Activated T-helper 1 cell treated with anti-CD3 and anti-CD28 coated beads, Interleukin-12 subunit alpha, Interleukin-12 subunit beta, Interleukin-2, Interleukin-4 antibody, amounts not matched to agents 30 ng/mL and 10 ng/mL and 1 ng/mL, durations not matched to agents 14 hours and 24 hours and 36 hours (primary cell): ENCODE measurements at regions of chr9 and their contacts with region 1.

Region 1: GRCh38 chr9:100352727-100353505 is at the start of gene TEX10:
- DNase-seq: peak; percentile 85
- H3K4me3 Mint-ChIP-seq: peak within 1 kb of the TSS; percentile 91
- H3K27ac Mint-ChIP-seq: peak within 1 kb of the TSS; percentile 75
- H3K4me1 Mint-ChIP-seq: peaks cover 50% of the 10 kb centered on the region
- H3K27me3 Mint-ChIP-seq: no peaks in the 10 kb centered on the region
- total RNA-seq, gene TEX10: 30.4 and 30.9 TPM in 2 replicates

Region 2: DNA sequence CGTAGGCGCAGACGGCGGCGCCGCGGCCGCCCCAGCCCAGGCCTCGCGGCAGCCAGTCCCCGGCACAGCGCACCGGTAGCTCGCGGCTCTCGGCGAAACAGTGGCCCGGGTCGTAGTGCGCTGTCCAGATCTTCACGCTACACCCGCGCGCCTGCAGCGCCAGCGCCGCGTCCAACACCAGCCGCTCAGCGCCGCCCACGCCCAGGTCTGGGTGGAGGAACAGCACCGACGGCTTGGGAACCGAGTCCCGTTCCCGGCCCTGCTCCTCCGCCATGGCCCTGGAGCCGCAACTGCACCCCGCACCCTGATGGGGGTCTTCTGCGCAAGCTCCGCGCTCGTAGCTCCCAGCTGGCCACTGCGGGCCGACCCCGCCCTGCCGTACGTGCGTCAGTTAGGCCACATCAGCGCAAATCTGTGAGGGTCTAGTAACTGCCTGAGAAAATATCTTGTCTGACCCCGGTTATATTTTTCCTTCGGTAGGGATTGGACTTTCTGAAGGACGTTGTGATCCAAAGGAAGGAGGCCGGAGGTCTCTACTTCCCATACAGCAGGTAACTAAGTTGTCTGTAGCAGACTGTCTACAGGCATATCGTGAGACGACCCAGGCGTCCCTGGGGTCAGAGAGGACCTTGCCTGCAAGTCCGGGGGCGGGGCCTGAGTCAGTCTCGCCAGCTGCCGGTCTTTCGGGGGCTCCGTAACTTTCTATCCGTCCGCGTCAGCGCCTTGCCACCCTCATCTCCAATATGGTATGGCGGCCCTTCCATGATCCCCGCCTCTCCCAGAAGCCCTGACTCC is 1131.1 kb before region 1 on chr9 and contains the starts of genes ALG2 and SEC61B:
- intact Hi-C with region 1: loop called (anchors 5 kb)
- DNase-seq: peak; percentile 89
- H3K4me3 Mint-ChIP-seq: peak within 1 kb of the TSS; percentile 99
- H3K27ac Mint-ChIP-seq: peak within 1 kb of the TSS; percentile 98
- H3K4me1 Mint-ChIP-seq: peaks cover 67% of the 10 kb centered on the region
- H3K27me3 Mint-ChIP-seq: no peaks in the 10 kb centered on the region
- total RNA-seq, gene ALG2: 37.6 and 39.7 TPM in 2 replicates
- total RNA-seq, gene SEC61B: 180 and 184 TPM in 2 replicates

Region 3: GRCh38 chr9:100028201-100028784 is 324.6 kb before region 1 on chr9:
- intact Hi-C with region 1: no loop called
- DNase-seq: peak; percentile 43
- H3K4me3 Mint-ChIP-seq: no peak overlapping the region
- H3K27ac Mint-ChIP-seq: no peak overlapping the region
- H3K4me1 Mint-ChIP-seq: peaks cover 14% of the 10 kb centered on the region
- H3K27me3 Mint-ChIP-seq: no peaks in the 10 kb centered on the region

Region 4: DNA sequence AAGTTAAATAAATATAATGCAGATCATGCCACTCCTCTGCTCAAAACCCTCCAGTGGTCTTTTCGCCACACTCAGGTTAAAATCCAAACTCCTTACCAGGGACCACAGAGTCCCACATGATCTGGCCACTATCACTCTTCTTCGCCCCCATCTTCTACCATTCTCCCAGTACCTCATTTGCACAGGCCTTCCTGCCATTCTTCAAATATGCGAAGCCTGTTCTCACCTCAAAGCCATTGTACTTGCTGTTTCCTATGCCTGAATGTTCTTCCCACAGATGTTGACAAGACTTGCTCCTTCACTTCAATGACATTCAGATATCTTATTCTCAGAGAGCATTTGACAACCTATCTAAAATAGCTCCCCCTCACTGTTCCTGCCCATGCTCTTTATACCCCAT is 11.0 kb before region 1 on chr9:
- intact Hi-C with region 1: loop called (anchors 1 kb)
- DNase-seq: no peak
- H3K4me3 Mint-ChIP-seq: no peak overlapping the region
- H3K27ac Mint-ChIP-seq: no peak overlapping the region
- H3K4me1 Mint-ChIP-seq: peaks cover 19% of the 10 kb centered on the region
- H3K27me3 Mint-ChIP-seq: no peaks in the 10 kb centered on the region

Region 5: GRCh38 chr9:100411472-100412283 is 58.8 kb after region 1 on chr9:
- intact Hi-C with region 1: loop called (anchors 1 kb)
- DNase-seq: peak; percentile 81
- H3K4me3 Mint-ChIP-seq: peak overlapping the region; percentile 83
- H3K27ac Mint-ChIP-seq: peak overlapping the region; percentile 65
- H3K4me1 Mint-ChIP-seq: peaks cover 13% of the 10 kb centered on the region
- H3K27me3 Mint-ChIP-seq: peaks cover 11% of the 10 kb centered on the region

Region 6: GRCh38 chr9:100426530-100427428 is 73.9 kb after region 1 on chr9 and contains the start of gene MSANTD3:
- intact Hi-C with region 1: loop called (anchors 1 kb)
- DNase-seq: peak; percentile 28
- H3K4me3 Mint-ChIP-seq: peak within 1 kb of the TSS; percentile 87
- H3K27ac Mint-ChIP-seq: peak within 1 kb of the TSS; percentile 91
- H3K4me1 Mint-ChIP-seq: peaks cover 21% of the 10 kb centered on the region
- H3K27me3 Mint-ChIP-seq: peaks cover 10% of the 10 kb centered on the region
- total RNA-seq, gene MSANTD3: 11.1 and 11.3 TPM in 2 replicates

Region 7: DNA sequence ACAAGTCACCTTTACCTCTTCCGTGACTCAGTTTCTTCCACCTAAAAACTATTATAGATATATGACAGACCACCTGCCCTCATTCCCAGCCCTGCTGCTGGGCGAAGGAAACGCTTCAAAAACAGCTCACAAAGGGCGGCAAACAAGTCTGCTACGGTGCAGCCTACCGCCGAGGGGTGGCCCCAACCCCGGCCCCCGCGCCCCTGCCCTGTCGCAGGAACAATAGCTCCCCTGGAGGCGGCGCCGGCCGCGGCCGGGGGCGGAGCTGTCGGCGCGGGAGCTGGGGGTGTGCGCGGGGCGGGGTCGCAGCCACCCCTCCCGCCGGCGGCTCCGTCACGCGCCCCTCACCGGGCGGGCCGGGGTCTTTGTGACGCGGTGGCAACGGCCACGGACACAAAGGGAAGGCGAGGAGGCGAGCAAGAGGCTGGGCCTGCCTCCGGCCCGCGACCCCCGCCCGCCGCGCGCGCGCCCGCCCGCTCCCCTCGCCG is 119.9 kb after region 1 on chr9 and contains the start of gene TMEFF1:
- intact Hi-C with region 1: loop called (anchors 5 kb)
- DNase-seq: peak; percentile 18
- H3K4me3 Mint-ChIP-seq: peak within 1 kb of the TSS; percentile 80
- H3K27ac Mint-ChIP-seq: no peak within 1 kb of the TSS
- H3K4me1 Mint-ChIP-seq: peaks cover 7% of the 10 kb centered on the region
- H3K27me3 Mint-ChIP-seq: peaks cover 52% of the 10 kb centered on the region
- total RNA-seq, gene TMEFF1: 0.13 and 0.42 TPM in 2 replicates

Region 8: GRCh38 chr9:101398068-101398929 is 1045.4 kb after region 1 on chr9 and contains the starts of genes MRPL50 and ZNF189:
- intact Hi-C with region 1: loop called (anchors 1 kb)
- DNase-seq: peak; percentile 95
- H3K4me3 Mint-ChIP-seq: peak within 1 kb of the TSS; percentile 98
- H3K27ac Mint-ChIP-seq: peak within 1 kb of the TSS; percentile 99
- H3K4me1 Mint-ChIP-seq: peaks cover 45% of the 10 kb centered on the region
- H3K27me3 Mint-ChIP-seq: no peaks in the 10 kb centered on the region
- total RNA-seq, gene MRPL50: 16.3 and 16.6 TPM in 2 replicates
- total RNA-seq, gene ZNF189: 11.7 and 11.8 TPM in 2 replicates